ENCODE measurements at regions of chr3 and their contacts with region 1.

Region 1: GRCh38 chr3:152268555-152269425 is at the start of gene MBNL1:
- DNase-seq: peak; percentile 83 to 89 (median 87)
- ATAC-seq: peak; percentile 26 to 81 (median 76)
- H3K4me3 ChIP-seq: peak within 1 kb of the TSS; percentile 66 to 93 (median 84)
- H3K27ac ChIP-seq: peak within 1 kb of the TSS; percentile 92 to 100 (median 99)
- H3K4me1 ChIP-seq: peaks cover 14 to 72% (median 48%) of the 10 kb centered on the region in 12 donors
- H3K27me3 ChIP-seq: no peaks in the 10 kb centered on the region
- CTCF ChIP-seq: no peak
- POLR2A ChIP-seq: peak in 1 of 2 donors; percentile 57
- total RNA-seq, gene MBNL1: 156 to 416 (median 193) TPM

Region 2: DNA sequence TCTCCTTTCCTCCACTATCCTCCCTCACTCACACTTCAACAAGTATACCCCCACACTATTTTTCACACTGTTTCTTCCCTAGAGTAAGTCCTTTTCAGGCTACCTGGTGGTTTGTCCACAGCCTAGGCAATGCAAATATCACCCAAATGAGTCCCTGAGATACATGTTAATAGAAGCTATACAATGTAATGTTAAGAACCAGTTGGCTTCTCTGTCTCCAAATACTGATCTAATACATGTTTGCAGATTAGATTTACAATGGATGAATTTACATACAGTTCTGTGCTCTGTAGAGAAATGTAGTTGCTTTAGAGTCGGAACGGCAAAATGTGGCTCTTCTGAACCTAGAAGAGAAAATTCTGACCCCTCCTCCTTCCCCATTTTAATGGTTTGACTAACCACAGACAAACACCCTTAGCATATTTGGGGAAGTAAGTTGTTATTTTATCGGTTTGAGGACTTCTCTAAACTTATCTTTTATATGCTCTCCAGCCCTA is 63.6 kb before region 1 on chr3:
- intact Hi-C with region 1: loop called in 5 of 10 experiments (anchors 5 to 10 kb)
- DNase-seq: no peak
- ATAC-seq: peak in 2 of 4 donors; percentile 38 to 52
- H3K4me3 ChIP-seq: peak overlapping the region in 7 of 12 donors; percentile 4 to 55 (median 24)
- H3K27ac ChIP-seq: peak overlapping the region in 5 of 12 donors; percentile 32 to 89 (median 73)
- H3K4me1 ChIP-seq: peaks cover 0 to 54% (median 14%) of the 10 kb centered on the region in 12 donors
- H3K27me3 ChIP-seq: no peaks in the 10 kb centered on the region
- CTCF ChIP-seq: no peak
- POLR2A ChIP-seq: no peak

Region 3: GRCh38 chr3:152309535-152310307 is 40.9 kb after region 1 on chr3:
- intact Hi-C with region 1: loop called in 2 of 10 experiments (anchors 5 kb)
- DNase-seq: no peak
- ATAC-seq: peak in 1 of 4 donors; percentile 25
- H3K4me3 ChIP-seq: no peak overlapping the region
- H3K27ac ChIP-seq: peak overlapping the region in 11 of 12 donors; percentile 16 to 84 (median 33)
- H3K4me1 ChIP-seq: peaks cover 6 to 85% (median 53%) of the 10 kb centered on the region in 12 donors
- H3K27me3 ChIP-seq: no peaks in the 10 kb centered on the region
- CTCF ChIP-seq: no peak
- POLR2A ChIP-seq: no peak

Region 4: DNA sequence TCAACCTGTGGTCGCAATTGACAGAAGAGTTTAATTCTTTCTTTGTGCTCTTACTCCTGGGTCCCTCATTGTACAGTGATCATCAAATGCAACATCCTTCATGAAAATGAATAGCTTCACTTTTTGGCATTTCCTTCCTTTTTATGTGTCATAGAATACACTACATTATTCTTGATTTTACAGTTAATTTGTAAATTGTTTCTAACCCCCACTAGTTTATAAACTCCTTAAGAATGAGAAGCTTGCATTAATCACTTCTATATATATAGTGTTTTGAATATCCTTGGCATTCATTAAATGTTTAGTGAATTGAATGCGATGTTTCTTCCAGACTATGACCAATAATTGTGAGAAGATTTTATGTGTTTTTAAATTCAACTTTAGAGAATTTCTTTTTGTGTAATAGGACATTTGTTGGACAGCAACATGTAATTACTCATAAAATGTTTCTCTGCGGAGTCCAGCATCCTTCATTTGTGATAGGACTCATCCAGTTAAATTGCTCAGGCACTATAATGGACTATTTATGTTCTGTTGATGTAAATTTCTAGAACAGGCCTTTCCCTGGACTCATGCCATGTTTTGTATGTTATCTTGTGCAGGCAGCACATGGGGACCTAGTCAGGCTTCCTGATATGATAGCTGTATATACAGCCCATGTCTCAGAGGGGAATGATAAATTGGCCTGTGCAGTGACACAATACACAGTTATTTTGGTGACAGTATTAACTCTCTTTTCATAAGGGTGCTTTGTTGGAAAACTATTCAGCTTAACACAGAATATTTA is 51.2 kb after region 1 on chr3:
- intact Hi-C with region 1: no loop called
- DNase-seq: no peak
- ATAC-seq: peak in 3 of 4 donors; percentile 23 to 52 (median 24)
- H3K4me3 ChIP-seq: no peak overlapping the region
- H3K27ac ChIP-seq: peak overlapping the region; percentile 19 to 78 (median 54)
- H3K4me1 ChIP-seq: peaks cover under 1 to 98% (median 87%) of the 10 kb centered on the region in 12 donors
- H3K27me3 ChIP-seq: no peaks in the 10 kb centered on the region
- CTCF ChIP-seq: no peak
- POLR2A ChIP-seq: no peak

Region 5: DNA sequence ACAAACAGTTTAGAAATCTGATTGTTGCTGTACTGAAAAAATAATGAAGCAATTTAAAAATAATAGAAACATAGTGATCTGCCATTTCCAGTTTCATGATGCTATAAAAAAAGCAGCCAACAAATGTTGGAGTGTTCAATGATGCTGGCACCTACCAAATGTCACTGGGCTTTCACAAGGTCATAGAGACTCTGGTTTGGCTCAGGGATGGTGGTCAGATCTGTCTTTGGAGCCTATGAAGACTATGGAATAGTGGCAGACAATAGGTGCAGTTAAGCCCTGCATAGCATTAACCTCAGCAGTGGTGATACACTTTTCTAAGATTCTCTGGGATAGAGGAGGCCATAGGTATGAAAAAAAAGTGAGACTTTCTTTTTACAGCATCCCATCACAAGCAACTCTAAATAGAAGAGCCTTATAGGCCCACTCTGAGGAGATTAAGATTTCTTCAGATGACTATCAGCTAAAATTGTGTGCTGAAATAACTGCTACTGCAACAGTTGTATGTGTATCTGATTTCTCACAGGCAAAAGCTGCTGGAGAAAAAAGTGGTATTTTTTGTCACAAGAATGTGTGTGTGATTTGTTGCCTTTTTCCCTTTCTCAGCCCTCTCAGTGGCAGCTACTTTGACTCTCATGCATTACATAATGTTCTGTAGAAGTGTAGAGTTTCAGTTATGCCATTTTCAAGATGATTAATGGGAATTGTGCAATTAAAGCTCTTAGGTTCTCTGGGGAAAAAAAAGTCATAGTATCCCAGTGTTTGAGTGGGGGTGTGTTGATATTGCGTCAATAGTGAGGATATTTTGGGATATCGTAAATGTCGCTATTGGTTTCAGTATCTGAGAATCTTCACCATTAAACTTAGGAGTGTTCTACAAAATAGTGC is 137.4 kb after region 1 on chr3:
- intact Hi-C with region 1: loop called in 2 of 10 experiments (anchors 5 to 10 kb)
- DNase-seq: peak in 1 of 5 donors; percentile 36
- ATAC-seq: peak in 3 of 4 donors; percentile 30 to 64 (median 58)
- H3K4me3 ChIP-seq: peak overlapping the region in 3 of 12 donors; percentile 17 to 25 (median 20)
- H3K27ac ChIP-seq: peak overlapping the region; percentile 68 to 94 (median 84)
- H3K4me1 ChIP-seq: peaks cover 7 to 80% (median 63%) of the 10 kb centered on the region in 12 donors
- H3K27me3 ChIP-seq: no peaks in the 10 kb centered on the region
- CTCF ChIP-seq: no peak
- POLR2A ChIP-seq: no peak

Region 6: DNA sequence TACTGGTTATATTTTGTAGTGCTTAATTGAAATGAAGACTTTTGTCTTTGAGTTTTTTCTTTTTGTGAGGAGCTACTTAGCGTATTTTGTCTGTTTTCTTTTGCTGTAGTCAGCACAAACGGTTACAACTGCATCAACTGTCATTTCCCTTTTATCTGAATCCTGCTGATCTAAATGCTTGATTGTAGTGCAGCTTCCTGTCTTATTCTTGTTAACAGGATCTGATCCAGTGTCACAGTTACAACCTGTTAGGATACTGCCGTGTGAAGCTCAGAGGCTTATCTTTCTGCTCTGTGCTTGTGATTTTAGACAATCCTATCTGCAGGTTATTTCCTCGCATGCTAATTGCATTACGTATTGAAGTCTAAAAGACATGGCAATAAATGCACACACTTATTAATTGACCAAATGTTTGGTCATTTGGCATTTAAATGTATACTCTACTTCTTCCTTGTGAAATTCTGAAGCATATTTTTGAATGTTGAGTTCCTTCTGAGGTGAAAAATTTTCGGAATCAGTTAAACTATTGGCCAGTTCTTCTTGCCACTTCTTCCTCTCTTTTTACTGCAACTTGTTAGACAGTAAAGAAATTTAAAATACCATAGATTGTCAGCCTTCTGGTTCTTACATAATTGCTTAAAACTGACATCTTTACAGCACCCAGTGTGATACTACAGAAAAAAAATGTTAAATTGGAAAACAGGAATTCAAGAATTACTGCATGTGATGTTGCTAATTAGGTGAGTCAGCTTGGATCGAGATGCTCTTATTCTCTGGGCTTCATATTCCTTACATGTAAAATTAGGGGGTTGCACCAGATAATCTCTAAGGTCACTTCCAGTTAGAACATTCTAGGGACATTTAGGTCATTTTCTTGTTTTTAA is 168.2 kb after region 1 on chr3:
- intact Hi-C with region 1: loop called in 8 of 10 experiments (anchors 5 to 10 kb)
- DNase-seq: no peak
- ATAC-seq: peak in 3 of 4 donors; percentile 48 to 76 (median 55)
- H3K4me3 ChIP-seq: no peak overlapping the region
- H3K27ac ChIP-seq: peak overlapping the region in 11 of 12 donors; percentile 2 to 64 (median 48)
- H3K4me1 ChIP-seq: peaks cover 4 to 57% (median 36%) of the 10 kb centered on the region in 12 donors
- H3K27me3 ChIP-seq: no peaks in the 10 kb centered on the region
- CTCF ChIP-seq: no peak
- POLR2A ChIP-seq: no peak

Measured in heart left ventricle (tissue), 16 donors.